Naive thymus-derived CD4-positive, alpha-beta T cell (primary cell): ENCODE measurements at regions of chr16 and their contacts with region 1.

Region 1: DNA sequence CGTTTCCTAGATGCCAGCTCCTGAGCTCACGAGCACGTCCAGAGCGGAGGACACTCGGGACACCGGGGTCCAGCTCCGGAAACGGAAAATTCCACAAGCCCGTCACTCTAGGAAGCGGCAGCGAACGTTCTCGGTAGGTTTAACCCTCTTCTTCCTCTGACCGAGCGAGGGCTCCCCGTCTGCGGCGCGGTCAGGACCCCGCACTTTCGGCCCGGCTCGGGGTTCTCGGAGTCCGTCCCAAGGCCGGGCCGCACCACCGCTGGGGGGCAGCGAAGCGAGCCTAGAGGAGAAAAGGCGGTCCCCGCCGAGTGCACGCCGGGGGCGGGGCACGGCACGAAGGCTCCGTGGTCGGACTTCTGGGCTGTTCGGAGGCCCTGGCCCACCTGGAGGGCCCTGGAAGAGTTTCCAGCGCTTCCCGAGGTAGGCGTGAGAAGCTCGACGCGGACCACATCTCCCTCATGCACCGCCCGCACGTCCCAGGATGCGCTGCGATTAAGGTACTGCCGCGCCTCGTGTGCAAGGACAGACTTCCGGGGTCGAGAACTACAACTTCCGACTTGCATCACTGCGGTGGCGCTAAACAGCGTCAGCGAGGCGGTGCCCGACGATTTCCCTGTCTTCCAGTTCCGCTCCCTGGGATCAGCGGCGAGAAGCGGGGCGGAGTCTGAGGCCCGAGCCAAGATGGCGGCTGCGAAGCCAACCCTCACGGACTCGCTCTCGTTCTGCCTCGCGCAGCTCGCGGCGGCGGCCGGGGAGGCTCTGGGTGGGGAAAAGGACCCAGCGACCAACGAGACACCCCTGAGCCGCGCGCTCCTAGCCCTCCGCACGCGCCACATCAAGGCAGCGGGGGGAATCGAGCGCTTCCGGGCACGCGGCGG is at the start of gene ARMC5:
- DNase-seq: peak in 7 of 9 donors; percentile 92 to 99 (median 98)
- ATAC-seq: peak; percentile 81
- H3K4me3 ChIP-seq: peak within 1 kb of the TSS; percentile 87
- H3K4me3 Mint-ChIP-seq: peak within 1 kb of the TSS; percentile 88 to 96 (median 94)
- H3K27ac ChIP-seq: peak within 1 kb of the TSS; percentile 95
- H3K27ac Mint-ChIP-seq: peak within 1 kb of the TSS; percentile 94 to 99 (median 98)
- H3K4me1 ChIP-seq: peaks cover 32 to 37% of the 10 kb centered on the region in 2 donors
- H3K4me1 Mint-ChIP-seq: peaks cover 26 to 51% (median 46%) of the 10 kb centered on the region in 7 donors
- H3K27me3 ChIP-seq: no peaks in the 10 kb centered on the region
- H3K27me3 Mint-ChIP-seq: no peaks in the 10 kb centered on the region
- total RNA-seq, gene ARMC5: 8.5 to 14.4 (median 11.5) TPM

Region 2: DNA sequence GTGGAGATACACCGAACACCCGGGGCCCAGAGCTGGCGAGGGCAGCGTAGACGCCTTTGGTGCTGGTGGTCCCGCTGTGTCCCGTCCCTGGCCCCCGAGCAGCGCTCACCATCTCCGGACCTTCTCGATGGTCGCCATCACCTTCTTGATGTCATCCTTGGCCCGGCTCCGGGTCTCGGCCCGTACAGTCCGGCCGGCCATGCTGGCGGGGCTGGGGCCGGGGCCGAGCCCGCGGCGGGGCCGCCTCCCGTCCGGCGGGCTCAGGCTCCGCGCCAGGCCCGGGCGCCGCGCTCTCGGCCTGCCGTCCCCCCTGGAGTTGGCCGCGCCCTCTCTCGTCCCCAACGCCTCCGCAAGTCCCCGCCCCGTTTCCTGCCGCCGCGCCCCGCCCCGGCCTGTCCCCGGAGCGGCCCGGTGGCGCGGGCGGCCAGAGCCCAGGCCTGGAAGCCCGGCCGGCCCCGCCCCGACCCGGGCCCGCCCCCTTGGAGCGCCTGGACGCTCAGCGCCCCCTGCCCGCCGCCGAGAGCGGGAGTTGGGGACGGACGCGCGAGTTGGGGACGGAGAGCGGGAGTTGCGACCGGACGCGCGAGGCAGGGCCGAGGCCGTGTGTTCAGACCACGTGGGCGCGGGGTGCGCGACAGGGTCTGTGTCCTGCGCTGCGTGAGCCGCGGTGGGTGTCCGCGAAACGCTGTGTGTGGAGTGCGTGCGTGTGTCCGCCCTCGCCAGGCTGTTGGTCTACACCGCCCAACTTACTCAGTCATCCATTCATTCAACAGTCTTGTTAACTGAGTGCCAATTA is 565.1 kb before region 1 on chr16 and contains the start of gene BCL7C:
- CTCF ChIA-PET with region 1: no interaction called
- POLR2A ChIA-PET with region 1: interaction called, 5 read pairs
- intact Hi-C with region 1: loop called in 1 of 2 experiments (anchors 2 kb)
- DNase-seq: peak; percentile 48 to 96 (median 61)
- ATAC-seq: peak; percentile 85
- H3K4me3 ChIP-seq: peak within 1 kb of the TSS; percentile 82
- H3K4me3 Mint-ChIP-seq: peak within 1 kb of the TSS; percentile 84 to 96 (median 90)
- H3K27ac ChIP-seq: peak within 1 kb of the TSS; percentile 82
- H3K27ac Mint-ChIP-seq: peak within 1 kb of the TSS; percentile 80 to 94 (median 91)
- H3K4me1 ChIP-seq: peaks cover 25 to 34% of the 10 kb centered on the region in 2 donors
- H3K4me1 Mint-ChIP-seq: peaks cover 26 to 60% (median 48%) of the 10 kb centered on the region in 7 donors
- H3K27me3 ChIP-seq: no peaks in the 10 kb centered on the region
- H3K27me3 Mint-ChIP-seq: no peaks in the 10 kb centered on the region
- total RNA-seq, gene BCL7C: 17.2 to 23.7 (median 22.7) TPM

Region 3: GRCh38 chr16:31032736-31033708 is 426.1 kb before region 1 on chr16 and contains the start of gene STX4:
- CTCF ChIA-PET with region 1: no interaction called
- POLR2A ChIA-PET with region 1: interaction called, 6 read pairs
- intact Hi-C with region 1: loop called in 1 of 2 experiments (anchors 1 kb)
- DNase-seq: peak; percentile 90 to 100 (median 97)
- ATAC-seq: peak; percentile 89
- H3K4me3 ChIP-seq: peak within 1 kb of the TSS; percentile 82
- H3K4me3 Mint-ChIP-seq: peak within 1 kb of the TSS; percentile 78 to 100 (median 96)
- H3K27ac ChIP-seq: peak within 1 kb of the TSS; percentile 93
- H3K27ac Mint-ChIP-seq: peak within 1 kb of the TSS; percentile 84 to 99 (median 97)
- H3K4me1 ChIP-seq: peaks cover 14 to 16% of the 10 kb centered on the region in 2 donors
- H3K4me1 Mint-ChIP-seq: peaks cover 15 to 35% (median 22%) of the 10 kb centered on the region in 7 donors
- H3K27me3 ChIP-seq: no peaks in the 10 kb centered on the region
- H3K27me3 Mint-ChIP-seq: peaks cover 0 to 3% (median 0%) of the 10 kb centered on the region in 5 donors
- total RNA-seq, gene STX4: 77.9 to 114 (median 100) TPM

Region 4: DNA sequence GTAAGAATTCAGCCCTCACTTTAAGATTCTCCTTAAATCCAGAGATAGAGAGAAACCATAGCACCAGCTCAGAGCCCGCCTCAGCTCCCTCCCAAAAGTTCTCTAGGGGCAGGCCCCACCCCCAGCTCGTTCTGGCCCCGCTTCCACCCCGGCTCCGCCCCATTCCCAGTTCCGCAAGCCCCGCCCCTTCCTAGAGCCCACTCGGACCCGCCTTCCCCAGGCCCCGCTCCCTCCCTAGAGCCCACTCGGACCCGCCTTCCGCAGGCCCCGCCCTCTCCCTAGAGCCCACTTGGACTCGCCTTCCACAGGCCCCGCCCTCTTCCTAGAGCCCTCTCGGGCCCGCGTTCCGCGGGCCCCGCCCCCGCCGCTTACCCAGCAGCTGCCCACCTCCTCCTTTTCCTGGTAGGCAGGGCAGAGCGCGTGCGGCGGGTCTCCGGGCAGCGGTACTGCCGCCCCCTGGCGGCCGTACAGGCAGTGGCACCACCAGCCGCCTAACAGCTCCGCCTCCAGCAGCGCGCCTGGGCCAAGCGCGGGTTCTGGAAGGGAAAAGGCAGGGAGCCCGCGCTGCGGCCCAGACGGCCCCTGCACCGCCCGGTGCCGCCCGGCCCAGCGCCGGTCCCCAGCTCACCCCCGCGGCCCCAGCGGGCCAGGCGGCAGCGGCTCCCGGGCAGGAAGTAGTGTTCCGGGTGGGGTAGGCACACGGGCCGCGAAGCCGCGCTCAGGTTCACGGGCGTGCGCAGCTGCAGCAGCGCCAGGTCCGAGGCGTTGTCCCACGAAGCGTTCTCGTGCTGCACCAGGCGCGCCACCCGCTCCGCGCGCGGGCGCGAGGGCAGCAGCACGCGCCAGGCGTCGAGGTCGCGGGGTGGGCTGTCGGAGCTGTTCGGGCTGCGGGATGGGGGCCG is 316.7 kb before region 1 on chr16:
- CTCF ChIA-PET with region 1: no interaction called
- POLR2A ChIA-PET with region 1: no interaction called
- intact Hi-C with region 1: loop called (anchors 1 kb)
- DNase-seq: peak; percentile 91 to 98 (median 95)
- ATAC-seq: peak; percentile 95
- H3K4me3 ChIP-seq: peak overlapping the region; percentile 68
- H3K4me3 Mint-ChIP-seq: peak overlapping the region; percentile 61 to 84 (median 72)
- H3K27ac ChIP-seq: peak overlapping the region; percentile 74
- H3K27ac Mint-ChIP-seq: peak overlapping the region; percentile 73 to 94 (median 84)
- H3K4me1 ChIP-seq: peaks cover 6 to 14% of the 10 kb centered on the region in 2 donors
- H3K4me1 Mint-ChIP-seq: peaks cover 0 to 17% (median 14%) of the 10 kb centered on the region in 7 donors
- H3K27me3 ChIP-seq: no peaks in the 10 kb centered on the region
- H3K27me3 Mint-ChIP-seq: peaks cover 0 to 3% (median 0%) of the 10 kb centered on the region in 5 donors

Region 5: DNA sequence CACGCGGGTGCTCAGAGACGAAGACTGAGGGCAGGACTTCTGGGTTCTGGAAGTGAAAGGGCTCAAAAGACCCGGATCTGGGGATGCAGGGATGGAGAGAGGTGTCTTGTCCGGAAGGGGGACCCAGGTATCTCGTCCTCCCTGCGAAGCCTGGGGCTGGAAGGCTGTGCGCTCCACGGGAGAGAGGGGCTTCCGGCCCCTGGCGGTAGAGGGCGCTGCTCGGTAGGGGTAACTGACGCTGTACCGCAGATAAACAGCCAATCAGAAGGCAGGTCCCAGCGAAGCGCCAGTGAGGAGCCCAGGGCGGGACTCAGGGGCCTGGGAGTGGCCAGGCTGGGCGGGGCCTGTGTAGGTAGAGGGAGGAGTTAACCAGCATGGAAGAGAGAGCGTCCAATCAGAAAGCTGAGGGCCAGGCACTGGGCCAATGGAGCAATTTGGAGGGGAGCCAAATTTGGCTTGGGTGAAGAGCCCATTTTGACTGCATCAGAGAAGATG is 13.7 kb after region 1 on chr16:
- CTCF ChIA-PET with region 1: interaction called, 17 read pairs
- POLR2A ChIA-PET with region 1: interaction called, 69 read pairs
- intact Hi-C with region 1: loop called (anchors 1 kb)
- DNase-seq: peak in 1 of 9 donors; percentile 36
- ATAC-seq: peak; percentile 33
- H3K4me3 ChIP-seq: no peak overlapping the region
- H3K4me3 Mint-ChIP-seq: peak overlapping the region; percentile 60 to 84 (median 79)
- H3K27ac ChIP-seq: no peak overlapping the region
- H3K27ac Mint-ChIP-seq: peak overlapping the region in 1 of 9 donors; percentile 64
- H3K4me1 ChIP-seq: peaks cover 4 to 6% of the 10 kb centered on the region in 2 donors
- H3K4me1 Mint-ChIP-seq: peaks cover 8 to 29% (median 21%) of the 10 kb centered on the region in 7 donors
- H3K27me3 ChIP-seq: no peaks in the 10 kb centered on the region
- H3K27me3 Mint-ChIP-seq: peaks cover 0 to 52% (median 14%) of the 10 kb centered on the region in 5 donors

Region 6: DNA sequence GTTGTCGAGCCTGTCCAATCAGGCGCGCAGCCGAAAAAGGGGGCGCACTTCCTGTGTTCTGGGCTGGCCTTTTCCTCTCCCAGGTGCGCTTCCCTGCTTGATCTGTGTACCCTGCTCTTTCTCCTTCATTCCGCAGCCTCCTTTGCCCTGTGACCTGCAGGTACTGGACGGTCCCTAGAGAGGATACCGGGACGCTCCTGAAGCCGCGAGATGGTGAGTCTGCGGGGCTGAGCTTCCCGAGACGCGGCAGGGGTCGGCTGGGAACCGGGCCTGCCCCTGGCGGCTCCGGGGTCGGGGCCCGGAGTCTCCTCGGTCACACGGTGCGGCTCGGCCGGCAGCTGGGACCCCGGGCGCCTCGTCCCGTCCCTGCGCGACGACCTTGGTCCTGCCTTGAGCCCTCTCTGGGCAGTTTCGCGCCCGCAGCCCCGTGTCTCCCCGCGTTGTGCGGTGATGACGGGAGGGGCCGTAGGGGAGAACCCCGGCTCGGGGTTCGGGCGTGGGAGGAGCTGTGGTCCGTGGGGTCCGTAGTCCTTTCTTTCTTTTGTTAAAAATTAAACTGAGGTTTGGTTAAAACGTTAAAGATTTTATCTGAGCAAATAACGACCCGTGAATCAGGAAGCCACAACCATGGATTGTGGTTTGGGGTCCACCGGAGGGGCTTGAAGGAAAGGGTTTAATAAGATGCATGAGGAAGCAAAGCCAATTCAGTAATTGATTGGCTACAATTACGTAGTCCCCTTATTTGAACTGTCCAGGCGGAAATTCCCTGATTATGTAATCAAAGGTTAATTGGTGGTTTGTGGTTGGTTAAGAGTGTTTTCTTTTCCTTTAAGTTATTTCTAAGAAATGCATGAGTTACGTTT is 241.7 kb after region 1 on chr16:
- CTCF ChIA-PET with region 1: no interaction called
- POLR2A ChIA-PET with region 1: interaction called, 10 read pairs
- intact Hi-C with region 1: loop called (anchors 1 kb)
- DNase-seq: peak; percentile 67 to 86 (median 81)
- ATAC-seq: peak; percentile 84
- H3K4me3 ChIP-seq: peak overlapping the region; percentile 95
- H3K4me3 Mint-ChIP-seq: peak overlapping the region; percentile 87 to 95 (median 91)
- H3K27ac ChIP-seq: peak overlapping the region; percentile 90
- H3K27ac Mint-ChIP-seq: peak overlapping the region; percentile 86 to 97 (median 93)
- H3K4me1 ChIP-seq: peaks cover 19 to 28% of the 10 kb centered on the region in 2 donors
- H3K4me1 Mint-ChIP-seq: peaks cover 20 to 39% (median 37%) of the 10 kb centered on the region in 7 donors
- H3K27me3 ChIP-seq: no peaks in the 10 kb centered on the region
- H3K27me3 Mint-ChIP-seq: peaks cover 0 to 24% (median 0%) of the 10 kb centered on the region in 5 donors